ENCODE measurements at regions of chr14 and their contacts with region 1.

Region 1: GRCh38 chr14:69153131-69153872 is 383 bp upstream of the DCAF5 start:
- DNase-seq: peak; percentile 94 to 97 (median 96)
- ATAC-seq: peak; percentile 92 to 96 (median 94)
- H3K4me3 ChIP-seq: peak overlapping the region; percentile 74 to 97 (median 90)
- H3K27ac ChIP-seq: peak overlapping the region; percentile 80 to 99 (median 96)
- H3K4me1 ChIP-seq: peaks cover 9 to 41% (median 27%) of the 10 kb centered on the region in 12 donors
- H3K27me3 ChIP-seq: no peaks in the 10 kb centered on the region
- CTCF ChIP-seq: no peak
- POLR2A ChIP-seq: peak; percentile 26 to 76

Region 2: DNA sequence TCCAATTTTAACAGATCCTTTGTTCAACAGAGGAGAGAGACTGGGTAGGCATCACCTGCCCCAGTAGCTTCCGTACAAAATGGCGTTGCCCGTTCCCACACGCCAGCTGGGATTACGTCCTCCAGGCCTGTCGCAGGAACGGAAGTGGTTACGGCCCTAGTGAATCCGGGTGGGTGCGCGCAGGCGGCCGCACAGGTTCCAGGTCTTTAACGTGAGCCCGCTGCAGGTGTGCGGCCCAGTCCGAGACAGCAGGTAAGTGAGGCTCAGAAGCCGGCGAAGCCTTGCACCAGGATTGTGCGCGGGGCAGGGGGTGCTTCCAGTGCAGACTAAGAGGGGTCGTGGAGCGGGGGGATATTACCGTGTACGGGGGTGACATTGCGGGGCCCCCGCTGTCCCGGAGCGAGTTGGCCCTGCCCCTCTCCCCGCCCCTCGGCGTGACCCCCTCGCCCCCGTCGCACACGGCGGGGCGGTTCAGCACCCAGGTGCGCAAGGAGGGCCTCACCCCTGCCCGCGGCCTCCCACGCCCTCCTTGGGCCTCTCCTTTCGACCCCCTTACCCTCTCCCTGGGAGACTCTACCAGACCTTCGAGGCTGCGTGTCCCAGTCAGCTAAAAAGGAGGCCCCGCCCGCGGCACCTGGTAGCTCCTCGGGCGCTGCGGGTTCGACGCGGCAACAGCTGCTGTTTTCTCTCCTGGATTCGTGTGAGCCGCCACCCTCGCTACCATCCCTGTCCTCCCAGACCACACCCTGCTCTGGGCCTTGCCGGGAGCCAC is 38.2 kb after region 1 on chr14 and contains the start of gene EXD2:
- intact Hi-C with region 1: loop called in 5 of 10 experiments (anchors 2 to 5 kb)
- DNase-seq: peak; percentile 87 to 92 (median 90)
- ATAC-seq: peak; percentile 97 to 99 (median 99)
- H3K4me3 ChIP-seq: peak within 1 kb of the TSS; percentile 71 to 98 (median 80)
- H3K27ac ChIP-seq: peak within 1 kb of the TSS in 11 of 12 donors; percentile 42 to 87 (median 71)
- H3K4me1 ChIP-seq: peaks cover 0 to 12% (median 6%) of the 10 kb centered on the region in 12 donors
- H3K27me3 ChIP-seq: no peaks in the 10 kb centered on the region
- CTCF ChIP-seq: no peak
- POLR2A ChIP-seq: no peak
- total RNA-seq, gene EXD2: 13.9 to 20.9 (median 16.1) TPM

Region 3: DNA sequence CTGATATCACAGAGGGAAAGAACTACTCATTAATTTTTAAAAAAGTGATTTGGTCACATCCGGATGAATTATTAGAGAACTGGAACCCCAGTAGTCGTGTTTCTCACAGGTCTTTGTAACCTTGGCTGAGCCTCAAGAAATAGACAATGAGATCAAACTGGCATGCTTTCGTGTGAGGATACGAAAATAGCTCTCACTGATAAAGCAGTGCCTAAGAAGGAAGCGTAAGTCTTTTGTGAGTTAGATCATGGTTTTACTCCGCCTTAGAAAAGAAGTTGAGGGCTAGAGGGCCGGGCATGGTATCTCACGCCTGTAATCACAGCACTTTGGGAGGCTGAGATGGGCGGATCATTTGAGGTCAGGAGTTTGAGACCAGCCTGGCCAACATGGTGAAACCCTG is 72.9 kb after region 1 on chr14:
- intact Hi-C with region 1: loop called in 3 of 10 experiments (anchors 10 kb)
- DNase-seq: peak in 1 of 5 donors; percentile 10
- ATAC-seq: peak; percentile 52 to 87 (median 82)
- H3K4me3 ChIP-seq: no peak overlapping the region
- H3K27ac ChIP-seq: peak overlapping the region in 11 of 12 donors; percentile 41 to 81 (median 59)
- H3K4me1 ChIP-seq: peaks cover 0 to 27% (median 11%) of the 10 kb centered on the region in 12 donors
- H3K27me3 ChIP-seq: no peaks in the 10 kb centered on the region
- CTCF ChIP-seq: no peak
- POLR2A ChIP-seq: no peak

Region 4: GRCh38 chr14:69363055-69363454 is 209.8 kb after region 1 on chr14:
- intact Hi-C with region 1: loop called in 1 of 10 experiments (anchors 10 kb)
- DNase-seq: peak in 4 of 5 donors; percentile 39 to 55 (median 48)
- ATAC-seq: peak; percentile 70 to 92 (median 88)
- H3K4me3 ChIP-seq: no peak overlapping the region
- H3K27ac ChIP-seq: no peak overlapping the region
- H3K4me1 ChIP-seq: no peaks in the 10 kb centered on the region
- H3K27me3 ChIP-seq: no peaks in the 10 kb centered on the region
- CTCF ChIP-seq: peak; percentile 31 to 70 (median 54)
- POLR2A ChIP-seq: no peak

Region 5: GRCh38 chr14:69501423-69501838 is 348.1 kb after region 1 on chr14:
- intact Hi-C with region 1: no loop called
- DNase-seq: peak; percentile 55 to 87 (median 69)
- ATAC-seq: peak; percentile 80 to 92 (median 88)
- H3K4me3 ChIP-seq: no peak overlapping the region
- H3K27ac ChIP-seq: peak overlapping the region in 8 of 12 donors; percentile 19 to 67 (median 38)
- H3K4me1 ChIP-seq: peaks cover 0 to 13% (median 2%) of the 10 kb centered on the region in 12 donors
- H3K27me3 ChIP-seq: no peaks in the 10 kb centered on the region
- CTCF ChIP-seq: no peak
- POLR2A ChIP-seq: no peak

Measured in heart left ventricle (tissue), 16 donors.